ENCODE measurements at regions of chr5 and their contacts with region 1.

Region 1: GRCh38 chr5:42656651-42657015 is 100.0 kb upstream of the CCDC152 start:
- DNase-seq: no peak
- H3K4me3 ChIP-seq: no peak overlapping the region
- CTCF ChIP-seq: no peak
- POLR2A ChIP-seq: no peak

Region 2: DNA sequence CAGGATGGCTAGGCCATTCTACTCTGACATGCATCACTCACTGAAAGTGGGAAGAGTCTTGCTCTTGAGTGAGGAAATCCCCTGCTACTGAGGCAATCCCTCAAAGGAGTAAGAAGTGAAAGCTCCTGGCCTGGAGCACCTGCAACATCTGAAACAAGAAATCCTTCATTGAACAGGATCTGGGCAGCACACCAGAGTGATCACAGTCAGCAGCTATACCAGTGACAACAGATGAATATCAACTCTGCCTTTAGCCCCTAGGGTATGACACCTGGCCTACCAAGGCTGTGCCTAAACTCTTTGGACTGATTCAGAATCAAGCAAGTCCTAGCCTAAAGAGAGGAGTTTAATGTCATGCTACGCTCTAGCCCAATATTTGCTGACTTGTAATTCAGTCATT is 56.2 kb before region 1 on chr5:
- intact Hi-C with region 1: loop called (anchors 10 kb)
- DNase-seq: no peak
- H3K4me3 ChIP-seq: no peak overlapping the region
- CTCF ChIP-seq: no peak
- POLR2A ChIP-seq: no peak

Measured in lower leg skin (tissue), 4 donors.